HEK293 (cell line): ENCODE measurements at regions of chr2 and their contacts with region 1.

Region 1: DNA sequence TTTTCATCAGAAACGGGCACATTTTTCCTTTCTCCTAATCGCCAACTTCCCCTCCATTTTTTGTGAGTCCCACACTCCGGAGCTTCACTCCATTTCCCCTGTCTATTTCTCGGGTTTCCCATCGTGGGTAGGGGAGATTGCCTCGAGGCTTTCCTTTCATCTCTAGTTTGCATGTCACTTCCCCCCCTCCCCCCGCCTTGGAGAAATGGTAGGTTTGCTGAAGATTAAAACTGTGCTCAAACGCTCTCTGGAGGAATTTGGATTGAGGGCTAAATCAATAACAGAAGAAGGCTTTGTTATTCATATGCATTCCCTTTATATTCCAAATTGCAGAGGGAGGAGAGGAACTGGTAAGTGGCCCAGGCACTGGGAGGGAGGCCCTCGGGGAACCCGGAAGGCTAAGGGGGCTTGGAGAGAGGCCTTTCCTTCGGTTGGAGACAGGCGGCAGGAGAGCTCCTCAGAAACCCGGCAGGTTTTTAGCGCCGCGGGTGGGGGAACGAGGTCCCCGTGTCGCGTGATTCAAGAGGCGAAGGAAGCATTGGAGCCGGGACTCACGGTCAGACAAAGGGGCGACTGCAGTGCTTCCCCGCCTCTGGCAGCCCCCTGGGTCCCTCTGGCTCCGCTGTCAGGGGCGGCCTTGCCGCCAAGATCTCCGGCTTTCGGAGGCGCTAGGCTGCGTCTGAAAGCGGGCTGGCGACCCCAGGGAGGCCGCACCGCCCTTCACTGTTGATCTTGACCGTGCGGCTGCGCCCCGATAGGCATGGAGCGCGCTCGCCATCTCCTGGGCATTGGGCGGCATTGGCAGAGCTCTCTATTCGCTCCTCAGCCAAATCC is 2.4 kb upstream of the HOXD12 start:
- H3K4me3 ChIP-seq: peak overlapping the region; percentile 49
- H3K27ac ChIP-seq: peak overlapping the region; percentile 85
- H3K4me1 ChIP-seq: peaks cover 6% of the 10 kb centered on the region
- CTCF ChIP-seq: peak; percentile 97

Region 2: DNA sequence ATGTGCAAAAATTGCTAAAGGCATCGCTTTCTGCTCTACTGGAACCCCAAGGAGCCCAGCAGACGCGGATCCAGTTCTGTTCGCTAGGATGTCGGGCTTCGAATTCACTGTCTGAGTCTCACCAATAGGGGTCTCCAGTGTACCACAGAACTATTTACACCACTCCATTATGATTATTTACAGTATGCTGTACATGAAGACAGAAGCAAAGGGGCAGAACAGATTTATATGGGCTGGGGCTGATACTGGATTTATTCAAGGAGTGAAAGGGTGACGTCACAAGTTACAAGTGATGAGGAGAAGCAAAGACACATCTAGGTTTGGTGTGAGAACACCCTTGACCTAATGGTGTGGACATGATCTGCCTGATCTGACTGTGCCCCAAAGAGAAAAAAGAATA is 730.4 kb before region 1 on chr2:
- CTCF ChIA-PET with region 1: interaction called, 11 read pairs
- POLR2A ChIA-PET with region 1: no interaction called
- H3K4me3 ChIP-seq: no peak overlapping the region
- H3K27ac ChIP-seq: no peak overlapping the region
- H3K4me1 ChIP-seq: no peaks in the 10 kb centered on the region
- CTCF ChIP-seq: peak; percentile 82

Region 3: GRCh38 chr2:175690113-175690837 is 406.9 kb before region 1 on chr2:
- CTCF ChIA-PET with region 1: interaction called, 21 read pairs
- POLR2A ChIA-PET with region 1: no interaction called
- H3K4me3 ChIP-seq: no peak overlapping the region
- H3K27ac ChIP-seq: no peak overlapping the region
- H3K4me1 ChIP-seq: no peaks in the 10 kb centered on the region
- CTCF ChIP-seq: peak; percentile 25; the same call in 1 of the 2 replicates

Region 4: DNA sequence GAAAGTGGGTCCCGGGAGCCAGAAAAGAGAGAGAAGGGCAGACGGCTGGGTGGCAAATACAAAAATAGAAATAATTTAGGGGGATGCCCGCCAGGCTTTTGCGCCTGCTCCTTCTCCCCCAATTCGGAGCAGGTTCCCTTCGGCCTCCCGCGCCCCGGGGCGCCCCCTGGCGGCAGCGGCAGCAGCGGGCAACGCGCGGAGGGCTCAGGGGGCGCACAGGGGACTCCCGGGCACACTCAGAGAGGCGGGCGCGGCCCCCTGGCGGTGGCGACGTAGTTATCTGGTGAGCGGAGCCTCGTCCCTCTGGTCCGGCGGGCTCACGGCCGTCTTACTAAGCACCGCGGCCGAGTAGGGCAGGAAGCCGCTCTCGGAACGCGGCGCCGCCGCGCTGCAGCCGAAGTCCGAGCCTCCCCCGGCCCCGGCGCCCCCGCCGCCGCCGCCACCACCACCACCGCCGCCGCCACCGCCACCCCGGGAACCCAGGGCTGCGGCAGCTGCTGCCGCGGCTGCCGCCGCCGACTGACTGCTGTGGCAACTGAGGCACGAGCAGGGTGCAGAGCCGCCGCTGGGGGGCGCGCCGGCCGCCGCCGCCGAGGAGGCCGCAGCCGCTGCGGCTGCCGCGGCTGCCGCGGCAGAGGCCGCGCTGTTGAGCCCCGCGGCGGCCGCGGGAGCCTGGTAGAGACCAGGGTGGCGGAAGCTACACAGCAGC is 17.2 kb before region 1 on chr2:
- CTCF ChIA-PET with region 1: interaction called, 33 read pairs
- POLR2A ChIA-PET with region 1: interaction called, 3 read pairs
- H3K4me3 ChIP-seq: peak overlapping the region; percentile 42
- H3K27ac ChIP-seq: peak overlapping the region; percentile 72; the same call in 1 of the 2 replicates
- H3K4me1 ChIP-seq: no peaks in the 10 kb centered on the region
- CTCF ChIP-seq: peak; percentile 95

Region 5: DNA sequence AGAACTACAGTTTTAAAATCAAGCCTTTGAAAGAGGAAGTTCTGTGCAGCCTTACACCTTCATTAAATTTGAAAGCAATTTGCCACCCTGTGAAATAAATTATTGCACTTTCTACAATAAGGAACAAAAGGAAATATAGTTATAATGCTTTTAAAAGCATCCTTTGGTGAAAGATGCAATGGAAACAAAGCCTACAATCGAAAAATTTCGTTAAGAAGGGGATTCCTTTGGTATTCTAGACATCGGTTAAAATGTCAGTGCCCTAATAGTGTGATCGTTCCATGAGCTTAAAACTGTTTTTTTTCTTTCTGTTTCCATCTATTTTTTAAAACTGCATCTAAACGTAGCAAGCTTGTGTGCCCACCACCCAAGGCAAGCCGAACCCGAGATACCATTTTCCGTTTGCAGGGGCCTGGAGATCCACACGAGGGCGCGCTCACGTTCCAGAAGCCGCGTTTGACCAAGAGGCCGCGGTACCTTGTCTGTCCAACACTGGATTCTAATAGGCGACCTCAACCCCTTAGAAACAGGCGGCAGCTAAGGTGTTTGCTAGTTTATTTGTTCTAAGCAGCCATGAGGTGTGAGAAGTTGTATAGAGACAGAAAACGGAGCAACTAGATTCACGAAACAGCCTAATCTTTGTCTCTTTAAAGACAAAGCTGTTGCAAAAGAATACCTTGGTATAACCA is 13.9 kb after region 1 on chr2:
- CTCF ChIA-PET with region 1: interaction called, 13 read pairs
- POLR2A ChIA-PET with region 1: interaction called, 75 read pairs
- H3K4me3 ChIP-seq: no peak overlapping the region
- H3K27ac ChIP-seq: no peak overlapping the region
- H3K4me1 ChIP-seq: 0 out of 2 replicates have a peak, but pooled peaks cover 2% of the 10 kb centered on the region
- CTCF ChIP-seq: peak; percentile 76